ENCODE measurements at regions of chr1 and their contacts with region 1.

Region 1: DNA sequence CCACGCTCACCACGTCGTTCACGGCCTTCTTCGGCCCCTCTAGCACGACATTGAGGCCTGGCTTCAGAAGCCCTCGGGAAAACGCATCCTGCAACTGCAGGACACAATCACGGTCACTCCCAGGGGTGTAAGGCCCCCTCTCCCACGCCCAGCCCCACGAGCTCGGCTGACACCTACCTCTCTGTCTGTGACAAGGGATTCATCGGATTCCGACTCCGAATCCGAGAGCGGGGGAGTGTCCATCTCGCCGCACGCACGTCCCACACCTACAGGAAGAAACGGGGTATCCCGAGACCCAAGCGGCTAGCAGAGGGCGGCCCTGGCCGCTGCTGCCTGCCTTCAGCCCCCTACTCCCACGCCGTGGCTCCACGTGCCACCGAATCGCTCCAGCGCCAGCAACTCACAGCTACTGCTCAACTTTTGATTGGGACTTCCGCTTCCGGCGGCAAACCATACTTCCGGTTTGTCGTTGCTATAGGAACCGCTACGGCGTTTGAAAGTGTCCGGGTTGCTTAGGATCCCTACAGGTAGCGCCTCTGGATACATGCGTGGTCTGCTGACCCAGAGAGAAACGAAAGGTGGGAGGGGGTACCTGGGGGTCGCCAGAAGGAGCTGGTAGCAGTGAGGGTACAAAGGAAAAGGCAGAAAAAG is at the starts of genes CFAP57 and EBNA1BP2:
- DNase-seq: peak; percentile 86
- H3K4me3 Mint-ChIP-seq: peak within 1 kb of the TSS; percentile 95
- H3K27ac Mint-ChIP-seq: peak within 1 kb of the TSS; percentile 89
- H3K4me1 Mint-ChIP-seq: peaks cover 8% of the 10 kb centered on the region
- H3K27me3 Mint-ChIP-seq: peaks cover 7% of the 10 kb centered on the region
- CTCF ChIP-seq: no peak
- total RNA-seq, gene CFAP57: 0.26 and 0.56 TPM in 2 replicates
- total RNA-seq, gene EBNA1BP2: 128 and 132 TPM in 2 replicates

Region 2: DNA sequence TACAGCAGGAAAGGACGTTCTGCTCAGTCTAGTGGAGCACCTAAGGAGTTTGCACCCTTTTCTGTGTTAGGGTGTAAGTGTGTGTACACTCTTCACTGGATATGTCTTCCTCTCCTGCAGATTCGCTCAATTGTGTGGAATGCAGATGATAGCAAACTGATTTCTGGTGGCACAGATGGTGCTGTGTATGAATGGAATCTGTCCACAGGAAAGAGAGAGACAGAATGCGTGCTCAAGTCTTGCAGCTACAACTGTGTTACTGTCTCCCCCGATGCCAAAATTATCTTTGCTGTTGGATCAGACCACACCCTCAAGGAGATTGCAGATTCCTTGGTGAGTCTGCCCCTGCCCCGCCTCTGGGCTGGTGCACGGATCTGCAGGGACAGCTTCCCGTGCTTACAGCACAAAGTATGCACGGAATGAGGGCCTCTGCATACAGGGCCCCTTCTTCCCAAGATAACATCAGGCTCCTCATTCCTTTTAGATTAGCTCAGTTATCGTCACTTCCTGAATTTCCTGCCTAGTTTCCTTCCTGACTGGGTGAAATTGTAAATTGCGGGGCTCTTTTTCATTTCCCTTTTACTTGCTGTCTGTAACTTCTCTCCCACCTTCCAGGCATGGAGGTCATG is 34.7 kb after region 1 on chr1:
- CTCF ChIA-PET with region 1: no interaction called
- intact Hi-C with region 1: loop called (anchors 2 kb)
- DNase-seq: peak; percentile 82
- H3K4me3 Mint-ChIP-seq: peak overlapping the region; percentile 69
- H3K27ac Mint-ChIP-seq: peak overlapping the region; percentile 98
- H3K4me1 Mint-ChIP-seq: peaks cover 23% of the 10 kb centered on the region
- H3K27me3 Mint-ChIP-seq: no peaks in the 10 kb centered on the region
- CTCF ChIP-seq: no peak

Measured in Calu3 (cell line).